Activated naive CD4-positive, alpha-beta T cell treated with anti-CD3 and anti-CD28 coated beads for 36 hours (primary cell): ENCODE measurements at regions of chr11 and their contacts with region 1.

Region 1: DNA sequence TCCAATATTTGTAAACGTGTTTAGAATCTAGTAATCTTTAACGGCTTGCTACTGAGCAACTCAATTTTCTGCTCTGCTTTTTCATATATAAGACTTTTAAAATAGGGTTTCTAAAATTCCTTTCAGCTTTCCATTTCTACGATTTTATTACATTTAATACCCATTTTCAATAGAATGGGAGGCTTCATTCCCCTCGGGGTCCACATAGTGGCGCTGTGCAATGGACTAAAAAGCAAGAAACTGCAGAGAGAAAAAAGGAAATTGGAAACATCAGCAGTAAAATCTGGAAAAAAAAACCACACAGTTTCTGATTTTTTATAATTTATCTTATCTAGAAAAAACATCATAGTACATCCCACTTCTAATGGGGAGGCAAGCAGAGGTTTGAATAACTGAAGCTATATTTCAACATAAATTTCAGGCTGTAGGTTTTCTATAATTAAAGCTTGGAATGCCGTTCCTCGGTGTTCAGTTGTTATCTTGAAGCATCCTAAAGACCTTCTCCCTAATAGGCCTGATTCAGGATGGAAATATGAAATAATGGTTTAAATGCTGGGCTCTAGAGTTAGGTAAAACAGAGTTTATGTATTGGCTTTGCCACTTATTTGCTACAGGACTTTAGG is 18.7 kb upstream of the JHY start:
- DNase-seq: peak; percentile 73
- H3K4me3 Mint-ChIP-seq: no peak overlapping the region
- H3K27ac Mint-ChIP-seq: no peak overlapping the region
- H3K4me1 Mint-ChIP-seq: no peaks in the 10 kb centered on the region
- H3K27me3 Mint-ChIP-seq: no peaks in the 10 kb centered on the region

Region 2: DNA sequence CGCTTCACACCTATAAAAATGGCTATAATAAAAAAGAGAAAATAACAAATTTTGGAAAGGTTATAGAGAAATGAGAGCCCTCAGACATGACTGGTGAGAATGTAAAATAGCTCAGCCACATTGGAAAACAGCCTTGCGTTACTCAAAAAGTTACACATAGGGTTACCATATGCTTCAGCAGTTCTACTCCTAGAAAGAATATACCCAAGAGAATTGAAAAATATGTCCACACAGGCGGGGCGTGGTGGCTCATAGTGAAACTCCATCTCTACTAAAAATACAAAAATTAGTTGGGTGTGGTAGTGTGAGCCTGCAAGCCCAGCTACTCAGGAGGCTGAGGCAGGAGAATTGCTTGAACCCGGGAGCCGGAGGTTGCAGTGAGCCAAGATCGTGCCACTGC is 11.2 kb after region 1 on chr11:
- CTCF ChIA-PET with region 1: interaction called, 12 read pairs
- intact Hi-C with region 1: no loop called
- DNase-seq: no peak
- H3K4me3 Mint-ChIP-seq: no peak overlapping the region
- H3K27ac Mint-ChIP-seq: no peak overlapping the region
- H3K4me1 Mint-ChIP-seq: peaks cover 3% of the 10 kb centered on the region
- H3K27me3 Mint-ChIP-seq: no peaks in the 10 kb centered on the region

Region 3: DNA sequence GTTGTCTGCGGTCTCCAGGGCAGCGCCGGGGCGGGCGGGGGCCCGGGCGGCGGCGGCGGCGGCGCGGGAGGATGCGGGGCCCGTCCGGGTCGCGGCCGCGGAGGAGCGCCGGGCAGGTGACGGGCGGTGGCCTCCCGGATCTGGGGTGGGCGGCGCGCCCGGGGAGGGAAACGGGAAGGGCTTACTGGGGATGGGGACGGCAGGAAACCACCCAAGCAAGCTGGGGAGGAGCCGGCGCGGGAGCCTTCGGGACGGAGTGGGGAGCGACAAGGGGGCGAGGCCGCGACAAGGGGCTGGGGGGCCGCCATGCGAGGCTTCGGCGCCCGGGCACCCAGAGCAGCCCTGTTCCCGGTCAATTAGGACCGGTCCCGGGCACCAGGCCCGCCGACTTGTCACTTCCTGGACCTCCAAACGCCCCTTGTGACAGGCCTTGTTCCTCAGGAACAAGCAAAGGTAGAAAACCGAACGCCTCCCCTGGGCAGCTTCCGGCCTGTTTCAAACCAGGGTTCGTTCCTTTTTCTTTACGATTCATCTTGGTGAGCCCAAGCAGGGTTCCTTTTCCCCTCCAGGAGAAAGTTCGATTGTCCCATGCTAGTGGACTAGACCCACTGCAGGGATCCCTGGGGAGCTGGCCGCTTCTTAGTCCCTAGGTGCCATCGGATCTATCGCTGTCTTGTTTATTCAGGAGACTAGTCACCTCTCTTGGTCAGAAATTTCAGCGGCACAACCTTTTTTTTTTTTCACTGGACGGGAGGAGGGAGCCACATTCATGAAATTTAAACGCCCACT is 19.2 kb after region 1 on chr11:
- CTCF ChIA-PET with region 1: interaction called, 6 read pairs
- intact Hi-C with region 1: loop called (anchors 2 kb)
- DNase-seq: peak; percentile 63
- H3K4me3 Mint-ChIP-seq: peak overlapping the region; percentile 78
- H3K27ac Mint-ChIP-seq: no peak overlapping the region
- H3K4me1 Mint-ChIP-seq: peaks cover 19% of the 10 kb centered on the region
- H3K27me3 Mint-ChIP-seq: peaks cover 1% of the 10 kb centered on the region

Region 4: GRCh38 chr11:123183391-123184099 is 319.7 kb after region 1 on chr11:
- CTCF ChIA-PET with region 1: no interaction called
- intact Hi-C with region 1: no loop called
- DNase-seq: no peak
- H3K4me3 Mint-ChIP-seq: no peak overlapping the region
- H3K27ac Mint-ChIP-seq: no peak overlapping the region
- H3K4me1 Mint-ChIP-seq: peaks cover 3% of the 10 kb centered on the region
- H3K27me3 Mint-ChIP-seq: peaks cover 17% of the 10 kb centered on the region